Activated CD8-positive, alpha-beta memory T cell treated with anti-CD3 and anti-CD28 coated beads, Interleukin-2, amount 10 ng/mL, durations not matched to agents 7 days and 5 days (primary cell): ENCODE measurements at regions of chr16 and their contacts with region 1.

Region 1: GRCh38 chr16:10964039-10964890 is 19.9 kb downstream of the CLEC16A start:
- DNase-seq: peak; percentile 89
- ATAC-seq: peak; percentile 63
- H3K4me3 Mint-ChIP-seq: peak overlapping the region; percentile 53
- H3K27ac Mint-ChIP-seq: peak overlapping the region; percentile 91
- H3K4me1 Mint-ChIP-seq: peaks cover 80% of the 10 kb centered on the region
- H3K27me3 Mint-ChIP-seq: no peaks in the 10 kb centered on the region

Region 2: GRCh38 chr16:10949370-10949970 is 14.8 kb before region 1 on chr16:
- CTCF ChIA-PET with region 1: interaction called, 54 read pairs
- DNase-seq: peak; percentile 73
- ATAC-seq: peak; percentile 63
- H3K4me3 Mint-ChIP-seq: no peak overlapping the region
- H3K27ac Mint-ChIP-seq: peak overlapping the region; percentile 48
- H3K4me1 Mint-ChIP-seq: peaks cover 58% of the 10 kb centered on the region
- H3K27me3 Mint-ChIP-seq: no peaks in the 10 kb centered on the region

Region 3: DNA sequence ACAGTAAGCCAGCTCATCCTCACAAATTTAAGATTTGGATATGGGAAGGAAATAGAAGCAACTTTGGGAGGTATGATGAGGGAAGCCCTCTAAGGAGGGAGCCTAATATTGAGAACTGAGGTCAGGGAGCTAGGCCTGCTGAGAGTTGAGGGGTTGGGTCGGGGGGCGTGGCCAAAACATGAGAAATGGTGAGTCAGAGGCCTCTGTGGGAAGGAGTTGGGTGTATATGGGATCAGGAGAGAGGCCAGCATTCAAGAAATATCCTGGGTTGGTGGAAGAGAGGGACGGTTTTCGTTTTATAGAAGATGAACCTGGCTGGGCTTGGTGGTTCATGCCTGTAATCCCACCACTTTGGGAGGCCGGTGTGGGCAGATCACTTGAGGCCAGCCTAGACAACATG is 28.5 kb after region 1 on chr16:
- CTCF ChIA-PET with region 1: no interaction called
- DNase-seq: peak; percentile 64
- ATAC-seq: no peak
- H3K4me3 Mint-ChIP-seq: no peak overlapping the region
- H3K27ac Mint-ChIP-seq: peak overlapping the region; percentile 69
- H3K4me1 Mint-ChIP-seq: peaks cover 86% of the 10 kb centered on the region
- H3K27me3 Mint-ChIP-seq: no peaks in the 10 kb centered on the region

Region 4: DNA sequence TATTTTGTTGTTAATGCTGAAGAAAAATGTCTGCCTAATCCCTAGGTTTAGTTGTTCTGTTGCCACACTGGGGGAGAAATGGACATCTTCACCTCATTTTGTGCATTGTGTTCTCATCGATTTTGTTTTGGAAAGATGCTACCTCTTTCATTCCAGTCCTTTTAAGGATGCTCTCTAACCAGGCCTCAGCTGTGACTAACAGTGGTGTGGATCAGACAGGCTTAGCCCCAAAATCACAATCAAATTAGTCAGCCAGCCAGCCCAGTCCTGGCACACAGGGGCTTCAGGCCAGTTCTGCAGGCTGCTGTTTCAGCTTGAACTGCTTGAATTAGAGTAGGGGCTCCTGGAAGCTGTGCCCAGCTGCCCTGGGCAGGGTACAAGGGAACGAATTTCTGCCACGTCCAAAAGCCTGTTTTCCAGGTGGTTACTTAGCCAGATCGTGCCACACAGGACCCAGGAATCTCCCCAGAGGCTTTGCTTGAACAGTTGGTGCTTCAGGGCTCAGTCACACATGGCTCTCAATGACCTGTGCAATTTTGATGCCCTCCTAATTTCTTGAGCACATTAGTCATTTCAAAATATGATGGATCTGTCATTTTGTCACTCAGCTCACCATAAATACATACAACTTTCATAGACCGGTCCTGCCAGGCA is 40.8 kb after region 1 on chr16:
- CTCF ChIA-PET with region 1: no interaction called
- DNase-seq: no peak
- ATAC-seq: no peak
- H3K4me3 Mint-ChIP-seq: no peak overlapping the region
- H3K27ac Mint-ChIP-seq: no peak overlapping the region
- H3K4me1 Mint-ChIP-seq: peaks cover 30% of the 10 kb centered on the region
- H3K27me3 Mint-ChIP-seq: no peaks in the 10 kb centered on the region

Region 5: GRCh38 chr16:11051879-11052808 is 87.9 kb after region 1 on chr16:
- CTCF ChIA-PET with region 1: interaction called, 16 read pairs
- DNase-seq: peak; percentile 97
- ATAC-seq: peak; percentile 79
- H3K4me3 Mint-ChIP-seq: peak overlapping the region; percentile 58
- H3K27ac Mint-ChIP-seq: peak overlapping the region; percentile 92
- H3K4me1 Mint-ChIP-seq: peaks cover 97% of the 10 kb centered on the region
- H3K27me3 Mint-ChIP-seq: no peaks in the 10 kb centered on the region

Region 6: GRCh38 chr16:11356573-11357331 is 392.5 kb after region 1 on chr16:
- CTCF ChIA-PET with region 1: interaction called, 34 read pairs
- DNase-seq: peak; percentile 70
- ATAC-seq: no peak
- H3K4me3 Mint-ChIP-seq: no peak overlapping the region
- H3K27ac Mint-ChIP-seq: no peak overlapping the region
- H3K4me1 Mint-ChIP-seq: peaks cover 69% of the 10 kb centered on the region
- H3K27me3 Mint-ChIP-seq: peaks cover 46% of the 10 kb centered on the region

Region 7: GRCh38 chr16:11396241-11397048 is 432.2 kb after region 1 on chr16:
- CTCF ChIA-PET with region 1: interaction called, 21 read pairs
- DNase-seq: peak; percentile 71
- ATAC-seq: peak; percentile 74
- H3K4me3 Mint-ChIP-seq: no peak overlapping the region
- H3K27ac Mint-ChIP-seq: no peak overlapping the region
- H3K4me1 Mint-ChIP-seq: no peaks in the 10 kb centered on the region
- H3K27me3 Mint-ChIP-seq: peaks cover 7% of the 10 kb centered on the region

Region 8: GRCh38 chr16:11407047-11407982 is 443.1 kb after region 1 on chr16:
- CTCF ChIA-PET with region 1: interaction called, 72 read pairs
- DNase-seq: peak; percentile 78
- ATAC-seq: peak; percentile 50
- H3K4me3 Mint-ChIP-seq: no peak overlapping the region
- H3K27ac Mint-ChIP-seq: no peak overlapping the region
- H3K4me1 Mint-ChIP-seq: peaks cover 4% of the 10 kb centered on the region
- H3K27me3 Mint-ChIP-seq: peaks cover 3% of the 10 kb centered on the region

Region 9: GRCh38 chr16:11715246-11715947 is 751.1 kb after region 1 on chr16:
- CTCF ChIA-PET with region 1: interaction called, 16 read pairs
- DNase-seq: no peak
- ATAC-seq: no peak
- H3K4me3 Mint-ChIP-seq: no peak overlapping the region
- H3K27ac Mint-ChIP-seq: no peak overlapping the region
- H3K4me1 Mint-ChIP-seq: peaks cover 16% of the 10 kb centered on the region
- H3K27me3 Mint-ChIP-seq: no peaks in the 10 kb centered on the region